ENCODE measurements at regions of chr3 and their contacts with region 1.

Region 1: DNA sequence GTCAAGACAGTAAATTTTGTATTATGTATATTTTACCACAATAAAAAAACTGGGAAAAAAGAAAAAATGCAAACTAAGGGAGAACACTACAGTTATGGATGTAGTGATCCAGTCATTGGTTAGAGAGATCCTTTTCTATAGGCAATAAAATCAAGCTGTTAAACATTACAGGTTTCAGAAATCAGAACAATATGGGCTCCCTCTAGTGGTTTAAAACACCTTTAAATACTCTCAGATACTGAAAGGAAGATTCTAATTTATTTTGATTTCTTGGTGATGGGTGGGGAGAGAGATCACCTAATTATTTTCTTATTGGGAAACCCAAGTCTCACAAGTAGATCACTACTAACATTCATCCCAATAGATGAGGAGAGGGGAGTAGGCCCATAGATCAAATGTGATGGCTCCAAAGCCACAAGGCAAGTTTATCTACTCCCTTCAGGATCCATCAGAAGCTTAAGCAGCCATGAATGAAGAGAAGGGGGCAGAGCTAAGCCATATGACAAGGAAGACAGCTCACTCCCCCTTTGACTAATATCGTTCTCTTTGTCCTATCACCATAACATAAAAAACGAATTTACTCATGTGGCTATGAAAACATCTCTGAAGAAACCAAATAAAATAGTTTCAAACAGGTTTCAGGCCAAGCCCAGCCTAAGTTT is 118.6 kb downstream of the ANO10 start:
- DNase-seq: no peak
- H3K4me3 ChIP-seq: no peak overlapping the region
- H3K27ac ChIP-seq: no peak overlapping the region
- H3K27me3 ChIP-seq: no peaks in the 10 kb centered on the region
- CTCF ChIP-seq: peak; percentile 44 to 79 (median 62)

Region 2: DNA sequence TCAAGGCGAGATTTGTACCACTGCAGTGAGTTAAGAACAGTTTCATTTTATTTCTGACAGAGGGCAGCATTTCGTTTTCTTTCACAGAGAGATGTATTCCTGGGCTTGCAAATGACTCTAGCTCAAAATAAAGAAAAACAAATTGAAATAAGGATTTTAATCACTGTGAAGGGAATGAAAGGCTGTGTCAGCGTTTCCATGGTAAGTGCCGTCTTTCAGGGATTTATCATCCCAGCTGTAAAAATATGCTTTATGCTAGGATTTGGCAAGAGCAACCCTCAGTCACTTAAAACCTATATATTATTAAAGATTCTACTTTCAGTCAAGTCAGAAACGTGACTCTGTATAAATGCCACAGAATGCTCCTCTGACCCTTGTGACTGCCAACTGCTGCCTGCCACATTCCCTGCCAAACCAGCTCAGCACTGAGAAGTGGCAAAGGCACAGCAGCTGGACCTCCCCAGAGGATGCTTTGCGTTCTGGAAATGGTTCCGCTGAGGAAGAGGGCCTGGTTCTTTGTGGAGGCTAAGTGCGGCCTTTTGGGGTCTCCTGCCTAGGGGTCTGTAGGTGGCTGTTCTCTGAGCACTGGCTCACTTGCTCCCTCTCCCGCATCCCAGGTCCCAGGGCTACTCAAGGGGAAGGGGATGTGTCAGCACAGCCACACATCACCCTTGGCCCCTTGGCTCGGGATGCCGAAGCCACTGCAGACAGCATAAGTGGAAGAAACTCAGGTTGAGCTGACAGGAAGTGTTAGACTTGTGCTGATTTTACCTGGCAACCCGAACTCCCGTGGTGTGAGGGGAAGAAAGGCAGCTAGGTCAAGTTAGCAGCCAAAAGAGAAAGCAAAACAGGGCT is 340.7 kb before region 1 on chr3:
- intact Hi-C with region 1: loop called (anchors 10 kb)
- DNase-seq: no peak
- H3K4me3 ChIP-seq: peak overlapping the region in 16 of 59 donors; percentile 1 to 26 (median 8)
- H3K27ac ChIP-seq: peak overlapping the region in 49 of 59 donors; percentile 4 to 97 (median 62)
- H3K27me3 ChIP-seq: no peaks in the 10 kb centered on the region
- CTCF ChIP-seq: peak; percentile 27 to 73 (median 56)

Region 3: DNA sequence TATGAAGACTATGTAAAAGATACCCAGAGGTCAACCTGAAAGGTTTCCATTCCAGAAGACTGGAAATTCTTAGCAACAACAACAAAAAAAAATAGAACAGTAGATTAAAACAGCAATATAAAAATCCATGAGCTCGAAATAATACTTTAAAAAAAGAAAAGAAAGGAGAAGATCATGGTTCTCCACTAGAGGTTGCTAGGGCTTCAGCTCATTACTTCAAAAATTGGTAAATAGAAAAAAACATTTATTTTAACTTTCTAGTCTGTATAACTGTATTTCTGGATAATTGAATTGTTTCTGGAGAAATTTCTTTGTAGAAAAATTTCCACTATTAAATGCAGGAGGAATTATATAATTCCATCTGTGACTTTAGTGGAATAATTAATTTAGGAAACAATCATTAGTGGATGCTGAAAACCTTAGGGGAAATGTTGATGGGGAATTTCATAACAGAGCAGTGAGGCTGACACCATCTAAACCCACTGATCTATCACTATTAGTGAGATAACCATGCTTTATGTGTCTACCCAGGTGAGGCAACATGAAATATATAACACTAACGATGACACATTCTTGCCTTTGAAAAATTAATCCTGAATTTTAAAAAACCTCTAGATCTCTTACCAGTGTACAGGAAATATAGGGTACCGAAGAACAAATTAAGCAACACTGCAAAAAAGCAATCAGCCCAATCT is 279.4 kb before region 1 on chr3:
- intact Hi-C with region 1: loop called in 1 of 2 experiments (anchors 10 kb)
- DNase-seq: no peak
- H3K4me3 ChIP-seq: no peak overlapping the region
- H3K27ac ChIP-seq: no peak overlapping the region
- H3K27me3 ChIP-seq: peaks cover 0 to 3% (median 0%) of the 10 kb centered on the region in 45 donors
- CTCF ChIP-seq: peak in 53 of 56 donors; percentile 19 to 64 (median 42)

Measured in dorsolateral prefrontal cortex (tissue), 120 donors.